Right cardiac atrium (tissue), 5 donors: ENCODE measurements at regions of chr3 and their contacts with region 1.

Region 1: GRCh38 chr3:106004137-106004681 is 135.4 kb upstream of the CBLB start:
- DNase-seq: no peak
- ATAC-seq: peak in 1 of 2 donors; percentile 78
- H3K4me3 ChIP-seq: peak overlapping the region; percentile 59
- H3K27ac ChIP-seq: no peak overlapping the region
- H3K4me1 ChIP-seq: no peaks in the 10 kb centered on the region
- H3K27me3 ChIP-seq: no peaks in the 10 kb centered on the region

Region 2: DNA sequence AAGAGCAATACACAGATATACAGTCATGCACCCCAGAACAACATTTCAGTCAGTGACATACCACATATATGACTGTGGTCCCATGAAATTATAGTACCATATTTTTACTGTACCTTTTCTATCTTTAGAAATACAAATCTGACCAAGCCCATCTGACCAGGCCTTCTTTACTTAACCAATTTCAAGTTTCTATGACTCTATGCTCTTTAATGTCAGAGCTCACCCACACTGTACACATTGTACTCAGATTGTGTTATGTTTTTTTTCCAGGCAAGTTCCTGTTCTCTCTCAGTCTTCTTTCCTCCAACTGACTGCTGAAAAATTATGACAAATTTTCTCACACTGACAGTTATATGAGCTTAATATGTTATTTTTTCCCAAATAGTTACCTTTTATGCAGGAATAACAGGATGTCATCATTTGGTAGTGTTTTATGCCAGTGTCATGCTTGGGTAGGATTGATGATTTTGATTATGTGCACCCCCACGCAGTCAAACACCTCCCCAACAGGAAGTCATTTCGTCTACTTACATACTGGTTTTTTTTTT is 127.4 kb before region 1 on chr3:
- intact Hi-C with region 1: loop called in 1 of 4 experiments (anchors 10 kb)
- DNase-seq: no peak
- ATAC-seq: peak in 1 of 2 donors; percentile 45
- H3K4me3 ChIP-seq: no peak overlapping the region
- H3K27ac ChIP-seq: no peak overlapping the region
- H3K4me1 ChIP-seq: no peaks in the 10 kb centered on the region
- H3K27me3 ChIP-seq: no peaks in the 10 kb centered on the region